ENCODE measurements at regions of chr1 and their contacts with region 1.

Region 1: DNA sequence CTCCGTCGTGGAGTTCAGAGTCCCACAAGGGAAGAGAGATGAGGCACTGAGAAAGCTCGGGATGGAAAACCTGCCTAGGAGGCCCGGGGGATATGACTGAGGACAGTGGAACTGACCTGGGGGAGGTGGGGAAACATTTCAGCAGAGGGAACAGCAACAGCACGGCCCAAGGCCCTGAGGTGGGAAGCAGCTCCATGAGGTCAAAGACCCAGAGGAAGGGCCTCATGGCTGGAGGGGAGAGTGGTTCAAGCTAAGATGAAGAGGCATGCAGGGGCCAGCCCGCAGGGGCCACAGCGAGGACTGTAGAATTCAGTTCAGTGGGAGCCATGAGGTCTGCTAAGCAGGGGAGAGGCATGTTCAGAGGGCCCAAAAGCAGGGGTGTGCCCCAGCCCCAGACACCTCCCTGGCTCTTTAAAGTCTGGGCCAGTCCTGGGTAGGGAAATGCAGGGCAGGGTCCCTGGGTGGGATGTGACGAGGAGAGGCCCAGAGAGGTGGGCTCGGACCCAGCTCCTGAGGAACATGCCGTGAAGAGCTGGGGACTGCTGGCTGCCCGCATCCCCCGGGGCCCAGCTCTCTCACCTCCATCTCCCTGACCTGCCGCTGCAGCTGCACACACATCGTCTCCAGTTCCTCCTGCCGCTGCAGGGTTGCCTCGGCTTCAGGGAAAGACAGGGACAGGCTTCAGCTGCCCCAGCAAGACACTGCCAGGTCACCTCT is 9.9 kb downstream of the UBXN11 start:
- DNase-seq: no peak
- ATAC-seq: no peak
- H3K4me3 ChIP-seq: no peak overlapping the region
- H3K27ac ChIP-seq: no peak overlapping the region
- H3K4me1 ChIP-seq: 0 out of 3 replicates have a peak, but pooled peaks cover 3% of the 10 kb centered on the region
- CTCF ChIP-seq: no peak
- EP300 ChIP-seq: no peak
- POLR2A ChIP-seq: no peak
- RAD21 ChIP-seq: no peak

Region 2: GRCh38 chr1:26284597-26285360 is 11.7 kb before region 1 on chr1:
- CTCF ChIA-PET with region 1: interaction called, 22 read pairs
- POLR2A ChIA-PET with region 1: no interaction called
- DNase-seq: peak; percentile 64
- ATAC-seq: peak; percentile 67 to 82
- H3K4me3 ChIP-seq: no peak overlapping the region
- H3K27ac ChIP-seq: peak overlapping the region in 1 of 2 experiments; percentile 64; a peak in 3 of 6 replicates
- H3K4me1 ChIP-seq: peaks cover 23% of the 10 kb centered on the region
- CTCF ChIP-seq: peak; percentile 63
- EP300 ChIP-seq: no peak
- POLR2A ChIP-seq: no peak
- RAD21 ChIP-seq: peak; percentile 69